Calu3 (cell line): ENCODE measurements at regions of chr5 and their contacts with region 1.

Region 1: DNA sequence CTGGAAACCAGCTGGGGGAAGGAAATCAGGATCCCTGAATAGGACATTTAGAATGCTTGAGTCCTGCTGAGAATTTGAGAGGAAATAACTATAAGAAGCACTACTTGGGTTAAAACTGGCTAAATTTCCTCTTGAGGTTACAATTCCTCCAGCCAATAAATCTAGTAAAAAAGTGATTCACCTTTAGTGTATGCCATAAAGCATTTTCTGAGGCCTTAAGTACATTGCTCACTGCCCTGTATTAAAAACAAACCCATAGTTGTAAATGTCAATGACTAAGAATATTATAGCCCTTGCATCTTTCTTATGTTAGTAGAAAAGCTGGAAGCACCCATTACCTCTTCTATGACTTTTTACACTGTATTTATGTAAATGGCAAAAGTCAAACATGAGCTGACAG is 634.7 kb upstream of the ARRDC3 start:
- DNase-seq: no peak
- H3K4me3 Mint-ChIP-seq: no peak overlapping the region
- H3K27ac Mint-ChIP-seq: no peak overlapping the region
- H3K4me1 Mint-ChIP-seq: no peaks in the 10 kb centered on the region
- H3K27me3 Mint-ChIP-seq: no peaks in the 10 kb centered on the region
- CTCF ChIP-seq: no peak

Region 2: DNA sequence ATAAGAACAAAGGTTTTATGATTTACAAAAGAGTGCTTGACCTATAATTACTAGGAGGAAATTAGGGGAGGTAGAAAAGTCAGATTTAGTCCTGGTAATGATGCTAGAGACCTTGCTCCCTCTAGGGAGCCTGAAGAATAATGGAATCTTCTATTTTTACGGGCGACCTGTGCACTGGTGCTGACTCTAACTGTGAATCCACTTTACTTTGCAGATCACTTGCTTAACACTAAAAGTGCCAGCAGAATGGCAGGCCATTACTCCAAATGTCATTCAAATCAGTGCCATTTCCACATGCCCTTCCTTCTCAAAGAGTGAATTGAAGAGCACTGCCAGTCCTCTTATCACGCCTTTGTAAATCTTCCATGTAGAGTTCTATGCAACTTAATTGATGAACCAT is 275.2 kb before region 1 on chr5:
- CTCF ChIA-PET with region 1: no interaction called
- intact Hi-C with region 1: no loop called
- DNase-seq: no peak
- H3K4me3 Mint-ChIP-seq: no peak overlapping the region
- H3K27ac Mint-ChIP-seq: no peak overlapping the region
- H3K4me1 Mint-ChIP-seq: no peaks in the 10 kb centered on the region
- H3K27me3 Mint-ChIP-seq: no peaks in the 10 kb centered on the region
- CTCF ChIP-seq: no peak

Region 3: GRCh38 chr5:91957666-91958065 is 60.1 kb before region 1 on chr5:
- CTCF ChIA-PET with region 1: no interaction called
- intact Hi-C with region 1: loop called (anchors 5 kb)
- DNase-seq: no peak
- H3K4me3 Mint-ChIP-seq: no peak overlapping the region
- H3K27ac Mint-ChIP-seq: no peak overlapping the region
- H3K4me1 Mint-ChIP-seq: peaks cover 8% of the 10 kb centered on the region
- H3K27me3 Mint-ChIP-seq: no peaks in the 10 kb centered on the region
- CTCF ChIP-seq: no peak